ENCODE measurements at regions of chr2 and their contacts with region 1.

Region 1: GRCh38 chr2:72150157-72150865 is 2.6 kb upstream of the CYP26B1 start:
- DNase-seq: no peak
- H3K4me3 ChIP-seq: peak overlapping the region; percentile 34
- CTCF ChIP-seq: peak; percentile 73

Region 2: GRCh38 chr2:71609958-71610357 is 540.4 kb before region 1 on chr2:
- CTCF ChIA-PET with region 1: interaction called, 25 read pairs
- POLR2A ChIA-PET with region 1: no interaction called
- DNase-seq: peak; percentile 7
- H3K4me3 ChIP-seq: no peak overlapping the region
- CTCF ChIP-seq: peak; percentile 23

Region 3: DNA sequence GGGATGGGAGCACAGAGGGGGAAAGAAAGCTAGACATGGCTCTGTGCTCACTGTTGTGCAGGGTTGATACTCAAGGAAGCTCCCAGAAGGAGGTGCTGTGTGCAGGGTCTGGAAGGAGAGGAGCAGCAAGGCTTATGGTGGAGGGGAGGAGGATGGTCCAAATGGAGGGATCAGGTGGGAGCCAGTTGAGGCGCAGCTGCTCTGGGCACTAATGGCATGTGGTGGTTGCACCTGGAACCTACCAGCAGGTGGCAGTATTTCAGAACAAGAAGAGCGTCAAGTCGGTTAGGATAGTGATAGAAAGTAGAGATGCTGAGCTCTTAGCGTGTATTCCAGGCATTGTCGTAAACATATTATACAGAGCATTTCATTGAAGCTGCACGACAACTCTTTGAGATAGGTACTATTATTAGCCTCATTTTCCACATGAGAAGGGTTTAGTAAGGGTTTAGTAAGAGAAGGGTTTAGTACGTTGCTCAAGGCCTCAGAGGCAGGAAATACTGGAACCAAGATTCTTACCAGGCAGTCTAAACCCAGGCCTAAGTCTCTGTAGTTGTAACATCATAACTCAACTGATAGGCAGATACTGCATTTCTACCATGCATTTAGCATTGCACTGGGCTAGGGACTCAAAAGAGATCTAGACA is 226.3 kb before region 1 on chr2:
- CTCF ChIA-PET with region 1: interaction called, 28 read pairs
- POLR2A ChIA-PET with region 1: no interaction called
- DNase-seq: no peak
- H3K4me3 ChIP-seq: no peak overlapping the region
- CTCF ChIP-seq: peak; percentile 48

Region 4: GRCh38 chr2:71995067-71995665 is 155.1 kb before region 1 on chr2:
- CTCF ChIA-PET with region 1: interaction called, 16 read pairs
- POLR2A ChIA-PET with region 1: no interaction called
- DNase-seq: no peak
- H3K4me3 ChIP-seq: no peak overlapping the region
- CTCF ChIP-seq: peak; percentile 29

Region 5: GRCh38 chr2:72129681-72130340 is 20.5 kb before region 1 on chr2:
- CTCF ChIA-PET with region 1: no interaction called
- POLR2A ChIA-PET with region 1: no interaction called
- DNase-seq: no peak
- H3K4me3 ChIP-seq: no peak overlapping the region
- CTCF ChIP-seq: no peak

Region 6: GRCh38 chr2:72745679-72746368 is 595.5 kb after region 1 on chr2:
- CTCF ChIA-PET with region 1: interaction called, 30 read pairs
- POLR2A ChIA-PET with region 1: no interaction called
- DNase-seq: no peak
- H3K4me3 ChIP-seq: no peak overlapping the region
- CTCF ChIP-seq: peak; percentile 49